Activated CD4-positive, alpha-beta memory T cell treated with anti-CD3 and anti-CD28 coated beads, Interleukin-2, amount 10 ng/mL, durations not matched to agents 7 days and 5 days (primary cell): ENCODE measurements at regions of chr12 and their contacts with region 1.

Region 1: GRCh38 chr12:57462251-57462911 is 2.8 kb downstream of the GLI1 start:
- DNase-seq: peak; percentile 90
- H3K4me3 Mint-ChIP-seq: peak overlapping the region; percentile 85
- H3K27ac Mint-ChIP-seq: peak overlapping the region; percentile 38
- H3K4me1 Mint-ChIP-seq: peaks cover 57% of the 10 kb centered on the region
- H3K27me3 Mint-ChIP-seq: peaks cover 23% of the 10 kb centered on the region

Region 2: GRCh38 chr12:57229634-57230380 is 232.6 kb before region 1 on chr12 and contains the start of gene SHMT2:
- CTCF ChIA-PET with region 1: interaction called, 13 read pairs
- POLR2A ChIA-PET with region 1: interaction called, 5 read pairs
- DNase-seq: peak; percentile 93
- H3K4me3 Mint-ChIP-seq: peak within 1 kb of the TSS; percentile 94
- H3K27ac Mint-ChIP-seq: peak within 1 kb of the TSS; percentile 80
- H3K4me1 Mint-ChIP-seq: peaks cover 75% of the 10 kb centered on the region
- H3K27me3 Mint-ChIP-seq: peaks cover 22% of the 10 kb centered on the region
- total RNA-seq, gene SHMT2: 224 to 244 TPM

Region 3: DNA sequence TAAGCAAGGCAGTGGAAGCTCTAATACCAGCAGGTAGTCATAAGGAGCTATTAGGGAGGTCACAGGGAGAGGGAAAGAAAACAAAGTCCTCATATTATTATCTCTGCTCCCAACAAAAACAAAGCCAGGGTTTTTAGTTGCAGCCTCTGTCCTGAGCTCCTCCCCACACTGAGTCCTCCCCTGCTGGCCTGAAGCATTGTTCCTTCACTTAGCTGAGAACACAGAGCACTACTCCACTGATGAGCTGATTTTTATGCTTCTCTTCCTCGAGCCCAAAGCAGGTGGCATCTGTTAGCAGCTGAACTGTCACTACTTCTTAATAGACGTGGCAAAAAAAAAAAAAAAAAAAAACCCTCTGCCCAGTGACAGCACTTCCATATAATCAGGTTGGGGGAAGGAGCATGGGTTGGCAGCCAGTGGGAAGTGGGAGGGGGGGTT is 200.9 kb before region 1 on chr12:
- CTCF ChIA-PET with region 1: interaction called, 13 read pairs
- POLR2A ChIA-PET with region 1: no interaction called
- DNase-seq: no peak
- H3K4me3 Mint-ChIP-seq: no peak overlapping the region
- H3K27ac Mint-ChIP-seq: no peak overlapping the region
- H3K4me1 Mint-ChIP-seq: peaks cover 4% of the 10 kb centered on the region
- H3K27me3 Mint-ChIP-seq: no peaks in the 10 kb centered on the region

Region 4: GRCh38 chr12:57430931-57431720 is 31.3 kb before region 1 on chr12 and contains the start of gene R3HDM2:
- CTCF ChIA-PET with region 1: interaction called, 17 read pairs
- POLR2A ChIA-PET with region 1: interaction called, 11 read pairs
- DNase-seq: peak; percentile 96
- H3K4me3 Mint-ChIP-seq: peak within 1 kb of the TSS; percentile 99
- H3K27ac Mint-ChIP-seq: peak within 1 kb of the TSS; percentile 99
- H3K4me1 Mint-ChIP-seq: peaks cover 43% of the 10 kb centered on the region
- H3K27me3 Mint-ChIP-seq: no peaks in the 10 kb centered on the region
- total RNA-seq, gene R3HDM2: 70.2 to 71.5 TPM

Region 5: GRCh38 chr12:57487597-57488401 is 25.4 kb after region 1 on chr12 and contains the start of gene MARS1:
- CTCF ChIA-PET with region 1: interaction called, 16 read pairs
- POLR2A ChIA-PET with region 1: interaction called, 5 read pairs
- DNase-seq: peak; percentile 95
- H3K4me3 Mint-ChIP-seq: peak within 1 kb of the TSS; percentile 86
- H3K27ac Mint-ChIP-seq: peak within 1 kb of the TSS; percentile 78
- H3K4me1 Mint-ChIP-seq: peaks cover 39% of the 10 kb centered on the region
- H3K27me3 Mint-ChIP-seq: no peaks in the 10 kb centered on the region
- total RNA-seq, gene MARS1: 262 to 282 TPM

Region 6: DNA sequence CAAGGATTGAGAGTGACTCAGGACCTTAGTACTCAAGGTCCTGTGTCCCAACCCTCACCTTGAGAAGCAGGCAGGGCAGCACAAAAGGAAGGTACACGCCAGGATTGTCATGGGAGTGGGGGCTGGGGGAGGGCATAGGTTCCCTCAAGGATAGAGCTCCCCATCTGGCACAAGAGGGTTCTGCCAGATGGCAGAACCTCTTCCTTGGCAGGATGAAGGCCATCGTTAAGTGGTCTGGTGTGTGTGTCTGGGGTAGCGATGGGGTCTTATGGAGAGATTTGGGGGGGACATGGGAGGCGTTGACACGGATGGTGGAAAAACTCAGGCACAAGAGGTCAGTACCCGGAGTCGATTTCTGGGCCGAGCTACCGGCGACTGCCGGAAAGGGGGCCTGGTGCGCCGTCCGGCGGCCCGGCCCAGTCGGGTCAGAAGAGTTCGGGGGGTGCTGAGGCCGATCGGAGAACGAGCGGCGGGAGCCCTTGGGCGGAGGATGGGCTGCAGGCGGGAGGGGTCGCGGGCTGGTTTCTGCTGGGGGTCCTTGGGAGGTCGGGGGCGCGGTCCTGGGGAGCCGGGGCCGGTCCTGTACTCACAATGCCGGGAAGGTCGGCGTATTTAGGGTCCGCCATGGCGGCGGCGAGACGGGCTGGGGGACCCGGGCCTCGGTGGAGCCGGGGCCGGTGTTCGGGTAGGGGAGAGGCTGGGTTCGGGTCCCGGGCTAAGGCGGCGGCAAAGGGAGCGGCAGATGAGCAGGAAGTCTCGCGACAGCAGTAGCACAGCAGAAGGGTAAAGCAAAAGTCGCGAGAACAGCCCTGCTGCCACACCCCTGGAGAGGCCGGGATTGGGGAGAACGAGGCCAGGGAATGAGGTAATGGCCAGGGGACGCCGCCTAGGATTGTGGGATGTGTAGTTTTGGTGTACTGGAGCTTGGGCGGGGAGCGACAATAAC is 84.3 kb after region 1 on chr12 and contains the start of gene DCTN2:
- CTCF ChIA-PET with region 1: interaction called, 11 read pairs
- POLR2A ChIA-PET with region 1: interaction called, 8 read pairs
- DNase-seq: peak; percentile 97
- H3K4me3 Mint-ChIP-seq: peak within 1 kb of the TSS; percentile 99
- H3K27ac Mint-ChIP-seq: peak within 1 kb of the TSS; percentile 91
- H3K4me1 Mint-ChIP-seq: peaks cover 60% of the 10 kb centered on the region
- H3K27me3 Mint-ChIP-seq: peaks cover 20% of the 10 kb centered on the region
- total RNA-seq, gene DCTN2: 80.9 to 85.1 TPM

Region 7: DNA sequence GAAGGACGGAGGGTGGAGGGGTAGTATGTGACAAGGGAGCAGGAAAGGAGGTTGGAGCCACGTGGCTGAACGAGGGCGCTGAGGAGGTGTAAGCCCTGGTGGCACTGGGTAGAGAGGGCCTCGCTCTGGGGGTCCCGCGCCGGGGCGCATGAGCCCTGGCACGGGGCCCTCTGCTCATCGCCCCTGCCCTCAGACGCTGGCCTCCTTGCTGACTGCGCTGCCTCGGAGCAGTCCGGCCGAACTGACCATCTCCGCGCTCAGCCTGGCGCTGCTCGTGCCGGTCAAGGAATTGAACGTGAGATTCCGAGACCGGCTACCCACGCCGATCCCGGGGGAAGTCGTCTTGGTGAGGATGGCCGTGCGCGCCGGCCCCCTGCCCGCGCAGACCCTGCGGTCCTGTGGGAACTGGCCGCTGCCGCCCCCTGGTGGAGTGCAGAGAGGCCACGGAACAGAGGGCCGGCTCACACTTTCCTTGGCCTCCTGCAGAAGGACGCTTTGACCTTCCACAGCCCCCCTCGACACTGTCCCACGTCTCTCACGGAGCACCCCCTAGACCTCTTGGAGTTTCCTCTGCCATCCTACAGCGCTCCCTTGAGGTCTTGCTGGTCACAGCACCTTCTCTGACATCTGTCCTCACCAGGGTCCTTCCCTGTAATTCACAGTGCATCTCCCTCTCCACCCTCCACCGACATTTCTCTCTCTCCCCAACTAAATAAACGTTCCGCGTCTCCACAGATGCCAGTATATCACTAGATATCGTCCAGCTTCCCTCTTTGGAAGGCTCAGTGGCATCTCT is 159.3 kb after region 1 on chr12:
- CTCF ChIA-PET with region 1: interaction called, 10 read pairs
- POLR2A ChIA-PET with region 1: no interaction called
- DNase-seq: peak; percentile 62
- H3K4me3 Mint-ChIP-seq: peak overlapping the region; percentile 50
- H3K27ac Mint-ChIP-seq: no peak overlapping the region
- H3K4me1 Mint-ChIP-seq: peaks cover 24% of the 10 kb centered on the region
- H3K27me3 Mint-ChIP-seq: peaks cover 99% of the 10 kb centered on the region